Heart right ventricle (tissue), 16 donors: ENCODE measurements at regions of chr19 and their contacts with region 1.

Region 1: GRCh38 chr19:43101950-43102349 is 19.4 kb upstream of the PSG2 start:
- DNase-seq: no peak
- ATAC-seq: no peak
- H3K4me3 ChIP-seq: no peak overlapping the region
- H3K27ac ChIP-seq: no peak overlapping the region
- H3K4me1 ChIP-seq: no peaks in the 10 kb centered on the region
- H3K27me3 ChIP-seq: peaks cover 0 to 19% (median 3%) of the 10 kb centered on the region in 7 donors
- CTCF ChIP-seq: no peak

Region 2: GRCh38 chr19:43191191-43191590 is 89.2 kb after region 1 on chr19:
- intact Hi-C with region 1: loop called in 1 of 10 experiments (anchors 10 kb)
- DNase-seq: no peak
- ATAC-seq: no peak
- H3K4me3 ChIP-seq: no peak overlapping the region
- H3K27ac ChIP-seq: no peak overlapping the region
- H3K4me1 ChIP-seq: no peaks in the 10 kb centered on the region
- H3K27me3 ChIP-seq: peaks cover 0 to 16% (median 7%) of the 10 kb centered on the region in 7 donors
- CTCF ChIP-seq: no peak

Region 3: GRCh38 chr19:43207991-43208390 is 106.0 kb after region 1 on chr19:
- intact Hi-C with region 1: loop called in 1 of 10 experiments (anchors 10 kb)
- DNase-seq: no peak
- ATAC-seq: no peak
- H3K4me3 ChIP-seq: no peak overlapping the region
- H3K27ac ChIP-seq: no peak overlapping the region
- H3K4me1 ChIP-seq: no peaks in the 10 kb centered on the region
- H3K27me3 ChIP-seq: peaks cover 0 to 5% (median 0%) of the 10 kb centered on the region in 7 donors
- CTCF ChIP-seq: no peak